AG04450 (cell line): ENCODE measurements at regions of chr2 and their contacts with region 1.

Region 1: DNA sequence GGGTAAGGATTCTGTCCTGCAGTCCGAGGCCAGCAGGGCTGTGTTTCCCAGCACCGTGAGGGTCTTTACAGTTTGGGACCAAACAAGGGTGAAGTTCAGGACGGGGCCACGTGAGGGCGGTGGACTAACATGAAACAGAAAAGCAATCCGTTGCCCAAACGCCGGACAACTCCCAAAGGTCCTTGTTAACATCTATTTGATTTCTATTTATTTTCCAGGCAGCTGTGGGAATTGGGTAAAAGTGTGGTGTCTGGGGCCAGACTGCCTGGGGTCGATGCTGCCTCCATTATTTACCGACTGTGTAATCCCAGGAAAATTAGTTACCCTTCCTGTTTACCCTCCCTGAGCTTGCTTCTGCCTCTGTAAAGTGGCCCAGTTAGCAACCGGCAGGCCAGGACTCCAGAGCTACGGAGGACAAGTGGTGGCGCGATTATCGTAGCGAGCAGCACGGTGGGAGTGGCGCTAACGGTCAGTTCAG is 66.3 kb upstream of the TCF7L1 start:
- DNase-seq: peak; percentile 74
- H3K4me3 ChIP-seq: peak overlapping the region; percentile 43
- H3K27ac ChIP-seq: no peak overlapping the region
- H3K27me3 ChIP-seq: peaks cover 3% of the 10 kb centered on the region
- CTCF ChIP-seq: peak; percentile 91

Region 2: DNA sequence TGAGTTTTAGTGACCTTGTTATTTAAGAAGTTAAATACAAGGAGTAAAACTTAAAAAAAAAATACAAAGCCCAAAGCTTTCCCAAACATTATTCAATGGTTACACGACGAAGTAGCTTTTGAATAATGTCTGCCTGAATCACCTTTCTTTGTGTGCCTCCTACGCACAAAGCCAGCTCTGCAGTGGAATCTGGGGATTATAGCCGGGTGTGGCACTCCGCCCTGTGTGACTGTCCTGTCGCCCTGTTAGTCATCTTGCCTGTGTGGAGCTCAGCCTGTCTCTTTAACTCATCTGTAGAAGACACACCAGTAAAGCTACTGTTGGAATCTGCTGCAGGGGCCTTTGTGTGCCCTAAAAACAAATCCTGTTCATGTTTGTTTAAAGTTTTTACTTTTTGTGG is 13.1 kb before region 1 on chr2:
- CTCF ChIA-PET with region 1: interaction called, 12 read pairs
- POLR2A ChIA-PET with region 1: no interaction called
- DNase-seq: no peak
- H3K4me3 ChIP-seq: no peak overlapping the region
- H3K27ac ChIP-seq: no peak overlapping the region
- H3K27me3 ChIP-seq: no peaks in the 10 kb centered on the region
- CTCF ChIP-seq: no peak

Region 3: GRCh38 chr2:85132834-85133637 is 66.1 kb after region 1 on chr2 and contains the start of gene TCF7L1:
- CTCF ChIA-PET with region 1: interaction called, 16 read pairs
- POLR2A ChIA-PET with region 1: interaction called, 3 read pairs
- DNase-seq: peak; percentile 72
- H3K4me3 ChIP-seq: peak within 1 kb of the TSS; percentile 93
- H3K27ac ChIP-seq: peak within 1 kb of the TSS; percentile 39
- H3K27me3 ChIP-seq: no peaks in the 10 kb centered on the region
- CTCF ChIP-seq: peak; percentile 91
- polyA plus RNA-seq, gene TCF7L1: 2.7 and 3.5 TPM in 2 replicates